ENCODE measurements at regions of chr9 and their contacts with region 1.

Region 1: DNA sequence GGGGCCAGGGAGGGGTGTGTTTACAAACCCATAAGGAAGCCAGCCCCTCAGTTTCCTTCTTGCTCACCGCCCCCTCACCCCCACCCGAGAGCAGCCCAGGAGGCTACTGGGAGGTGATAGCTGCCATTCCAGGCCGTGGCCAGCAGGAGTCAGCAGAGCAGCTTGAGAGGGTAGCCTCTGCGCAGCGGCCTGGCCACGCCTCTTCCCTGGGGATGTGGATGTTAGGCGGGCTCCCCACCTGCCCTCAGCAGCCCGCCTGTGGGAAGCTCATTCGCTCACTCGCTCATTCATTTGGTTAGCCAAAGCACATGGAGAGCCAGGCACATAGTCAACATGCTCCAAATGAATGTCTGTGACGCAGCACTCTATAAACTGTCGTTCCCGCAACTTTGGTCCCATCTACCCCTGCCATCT is 6.1 kb upstream of the DPM2 start:
- DNase-seq: peak; percentile 79 to 93
- H3K4me3 ChIP-seq: no peak overlapping the region
- H3K27ac ChIP-seq: no peak overlapping the region
- H3K4me1 ChIP-seq: peaks cover 0 to 16% (median 7%) of the 10 kb centered on the region in 4 experiments; a peak in 6 of 7 replicates
- H3K27me3 ChIP-seq: no peaks in the 10 kb centered on the region
- CTCF ChIP-seq: peak in 2 of 3 experiments; percentile 91 to 94; a peak in 3 of 4 replicates
- EP300 ChIP-seq: no peak
- POLR2A ChIP-seq: no peak
- RAD21 ChIP-seq: peak; percentile 85 to 88

Region 2: DNA sequence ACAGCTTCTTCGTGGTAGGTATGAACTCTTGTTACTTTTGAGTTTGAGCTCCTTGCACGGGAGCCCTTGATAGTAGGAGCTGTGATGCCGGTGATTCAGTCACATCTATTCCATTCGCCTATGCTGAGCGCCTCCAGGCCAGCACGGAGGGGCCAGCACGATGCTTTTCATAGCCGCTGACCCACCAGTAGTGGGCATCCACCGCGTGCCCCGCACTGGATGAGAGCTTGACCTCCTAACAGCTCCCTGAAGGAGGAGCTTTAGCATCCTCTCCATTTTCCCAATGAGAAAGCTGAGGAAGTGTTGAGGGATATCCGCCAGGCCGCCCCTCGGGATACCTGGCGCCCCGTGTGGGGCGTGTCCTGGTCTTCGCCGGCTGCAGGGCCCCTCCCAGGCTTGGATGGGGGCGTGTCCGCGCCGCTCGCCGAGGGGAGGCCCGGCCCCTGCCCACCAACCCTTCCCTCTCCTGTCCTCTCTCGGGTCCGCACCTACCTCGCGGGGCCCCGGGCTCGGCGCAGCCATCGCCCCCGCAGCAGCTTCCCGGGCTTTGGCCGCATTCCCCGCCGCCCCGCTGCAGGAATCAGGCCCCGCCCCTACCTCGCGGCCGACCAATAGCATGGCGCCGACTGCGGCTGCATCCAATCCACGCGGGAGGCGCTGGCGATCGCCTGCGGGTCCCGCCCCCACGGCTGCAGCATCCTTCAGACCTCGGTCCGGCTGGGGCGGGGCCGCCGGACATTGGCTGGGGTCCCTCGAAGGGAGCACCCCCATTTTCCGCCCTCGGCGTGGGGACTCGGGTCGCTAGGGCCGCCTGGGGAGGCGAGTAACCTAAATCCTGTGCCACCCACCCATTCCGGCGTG is 13.3 kb before region 1 on chr9 and contains the start of gene PIP5KL1:
- CTCF ChIA-PET with region 1: interaction called, 68 read pairs
- POLR2A ChIA-PET with region 1: interaction called, 6 read pairs
- DNase-seq: peak; percentile 67 to 97
- H3K4me3 ChIP-seq: peak within 1 kb of the TSS; percentile 26 to 62 (median 52)
- H3K27ac ChIP-seq: no peak within 1 kb of the TSS
- H3K4me1 ChIP-seq: peaks cover 13 to 24% (median 20%) of the 10 kb centered on the region in 4 experiments
- H3K27me3 ChIP-seq: peaks cover 0 to 18% (median 16%) of the 10 kb centered on the region in 4 experiments; a peak in 6 of 7 replicates
- CTCF ChIP-seq: peak in 1 of 3 experiments; percentile 5; a peak in 1 of 4 replicates
- EP300 ChIP-seq: 0 out of 3 replicates have a peak, but pooled peaks of 1 of the 2 experiments have one; percentile 9
- POLR2A ChIP-seq: peak in 1 of 2 experiments; percentile 39; a peak in 2 of 3 replicates
- RAD21 ChIP-seq: 0 out of 4 replicates have a peak, but pooled peaks of 1 of the 2 experiments have one; percentile 2
- total RNA-seq, gene PIP5KL1: 12.2 and 13.4 TPM in 2 replicates

Region 3: DNA sequence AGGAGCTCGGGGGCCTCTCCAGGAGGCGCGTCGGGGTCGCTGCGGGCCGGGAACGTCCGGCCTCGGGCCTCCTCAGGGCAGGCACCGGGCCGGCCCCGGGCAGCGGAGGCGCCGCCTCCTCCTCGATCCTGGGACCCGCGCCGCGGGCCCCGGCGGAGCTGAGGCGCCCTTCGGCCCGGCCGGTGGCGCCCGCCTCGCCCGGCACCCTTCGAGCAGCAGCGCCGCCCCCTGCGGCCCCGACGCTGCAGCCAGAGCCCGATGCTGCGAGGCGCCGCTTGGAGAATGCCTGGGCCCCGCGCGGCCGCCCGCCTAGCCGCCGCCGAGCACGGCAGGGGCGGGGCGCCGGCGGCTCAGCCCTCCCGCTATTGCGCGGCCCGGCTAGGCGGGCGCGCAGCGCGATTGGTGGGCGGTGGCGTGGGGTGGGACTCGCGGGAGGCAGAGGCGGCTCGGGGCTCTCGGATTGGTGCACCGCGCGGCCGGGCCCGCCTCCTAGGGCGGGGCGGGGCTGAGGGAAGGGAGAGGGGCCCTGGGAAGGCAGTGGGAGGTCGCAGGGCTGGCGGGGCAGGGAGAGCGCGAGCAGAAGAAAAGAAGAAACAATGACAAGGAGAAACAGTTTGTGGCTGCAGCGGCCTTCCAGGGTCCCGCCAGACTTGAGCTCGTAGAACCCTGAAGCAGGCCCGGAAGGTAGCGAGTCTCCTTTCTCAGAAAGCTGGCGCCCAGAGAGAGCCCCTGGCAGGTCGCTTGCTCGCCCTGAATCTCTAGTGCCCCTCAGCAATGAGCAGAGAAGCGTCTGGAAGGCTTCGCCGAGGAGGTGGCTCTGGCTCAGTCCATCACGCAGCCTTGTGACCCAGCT is 37.2 kb after region 1 on chr9 and contains the start of gene EEIG1:
- CTCF ChIA-PET with region 1: interaction called, 55 read pairs
- POLR2A ChIA-PET with region 1: interaction called, 5 read pairs
- DNase-seq: peak; percentile 80 to 97
- H3K4me3 ChIP-seq: peak within 1 kb of the TSS; percentile 88 to 99 (median 93)
- H3K27ac ChIP-seq: peak within 1 kb of the TSS; percentile 79
- H3K4me1 ChIP-seq: peaks cover 4 to 34% (median 24%) of the 10 kb centered on the region in 4 experiments
- H3K27me3 ChIP-seq: no peaks in the 10 kb centered on the region
- CTCF ChIP-seq: no peak; a peak in 1 of 4 replicates
- EP300 ChIP-seq: no peak
- POLR2A ChIP-seq: no peak; a peak in 2 of 3 replicates
- RAD21 ChIP-seq: no peak
- total RNA-seq, gene EEIG1: 50.8 and 51.3 TPM in 2 replicates

Region 4: DNA sequence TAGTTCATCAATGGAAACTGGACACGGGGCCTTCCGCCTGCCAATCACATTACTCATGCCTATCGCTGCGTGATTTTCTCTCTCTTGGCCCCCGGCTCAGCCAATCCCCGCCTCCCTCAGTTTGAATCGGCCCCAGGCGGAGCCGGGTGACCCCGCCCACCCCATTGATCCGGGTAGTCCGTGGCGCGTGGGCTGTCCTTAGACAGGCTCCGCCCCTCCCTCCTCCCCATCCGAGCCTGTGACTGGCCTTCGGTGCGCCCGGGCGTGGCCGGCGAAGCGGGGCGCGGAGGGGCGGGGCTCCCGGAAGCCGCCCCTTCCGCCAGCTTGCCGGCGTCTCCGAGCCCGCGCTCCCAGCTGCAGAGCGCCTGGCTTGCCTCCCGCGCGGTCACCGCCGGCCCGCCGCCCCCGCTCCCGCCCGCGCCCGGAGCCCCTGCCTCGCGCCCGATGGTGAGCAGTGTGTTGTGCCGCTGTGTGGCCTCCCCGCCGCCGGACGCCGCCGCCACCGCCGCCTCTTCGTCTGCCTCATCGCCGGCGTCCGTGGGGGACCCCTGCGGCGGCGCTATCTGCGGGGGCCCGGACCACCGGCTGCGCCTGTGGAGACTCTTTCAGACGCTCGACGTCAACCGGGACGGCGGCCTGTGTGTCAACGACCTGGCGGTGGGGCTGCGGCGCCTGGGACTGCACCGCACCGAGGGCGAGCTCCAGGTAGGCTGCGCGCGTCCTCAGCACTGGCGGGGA is 124.3 kb after region 1 on chr9 and contains the start of gene SLC25A25:
- CTCF ChIA-PET with region 1: interaction called, 27 read pairs
- POLR2A ChIA-PET with region 1: interaction called, 3 read pairs
- DNase-seq: peak; percentile 98 to 100
- H3K4me3 ChIP-seq: peak within 1 kb of the TSS; percentile 75 to 84 (median 82)
- H3K27ac ChIP-seq: peak within 1 kb of the TSS; percentile 92
- H3K4me1 ChIP-seq: peaks cover 10 to 16% (median 12%) of the 10 kb centered on the region in 4 experiments
- H3K27me3 ChIP-seq: no peaks in the 10 kb centered on the region; a peak in 1 of 7 replicates
- CTCF ChIP-seq: no peak
- EP300 ChIP-seq: no peak
- POLR2A ChIP-seq: no peak
- RAD21 ChIP-seq: no peak
- total RNA-seq, gene SLC25A25: 16.8 and 18.5 TPM in 2 replicates

Region 5: DNA sequence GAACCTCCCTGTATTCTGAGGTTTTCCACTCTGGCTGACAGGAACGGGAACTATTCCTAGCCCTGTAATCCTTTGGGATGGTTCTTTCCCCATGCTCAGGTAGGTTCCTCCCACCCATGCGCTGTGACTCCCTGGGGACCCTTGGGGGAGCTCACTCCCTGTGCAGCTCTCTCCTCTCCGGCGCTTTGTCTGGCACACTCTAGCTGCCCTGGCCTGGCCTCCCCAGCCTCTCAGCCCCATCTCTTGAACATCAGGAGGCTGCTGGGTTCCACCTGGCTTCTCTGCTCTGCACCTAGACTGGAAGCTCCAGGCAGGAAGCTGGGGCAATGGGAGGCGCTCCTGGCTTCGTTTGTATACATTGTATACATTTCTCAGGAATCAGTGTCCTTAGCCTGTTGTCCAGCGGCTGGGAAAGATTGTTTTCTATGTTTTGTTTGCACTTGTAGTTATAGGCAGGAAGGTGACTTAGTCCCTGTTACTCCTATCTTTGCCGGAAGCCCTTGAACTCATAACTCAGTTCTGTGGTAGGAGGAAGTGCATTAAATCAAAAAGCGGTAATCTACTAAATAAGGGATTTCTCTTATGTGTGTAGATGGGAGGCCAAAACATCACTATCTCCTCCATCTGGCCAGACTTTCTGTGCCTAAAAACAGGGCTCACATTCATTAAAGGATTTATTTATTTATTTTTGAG is 144.7 kb after region 1 on chr9:
- CTCF ChIA-PET with region 1: interaction called, 17 read pairs
- POLR2A ChIA-PET with region 1: no interaction called
- DNase-seq: no peak
- H3K4me3 ChIP-seq: no peak overlapping the region
- H3K27ac ChIP-seq: no peak overlapping the region
- H3K4me1 ChIP-seq: peaks cover 2 to 5% (median 2%) of the 10 kb centered on the region in 4 experiments; a peak in 4 of 7 replicates
- H3K27me3 ChIP-seq: no peaks in the 10 kb centered on the region
- CTCF ChIP-seq: no peak
- EP300 ChIP-seq: no peak
- POLR2A ChIP-seq: no peak
- RAD21 ChIP-seq: no peak

Region 6: GRCh38 chr9:128117613-128118471 is 174.1 kb after region 1 on chr9:
- CTCF ChIA-PET with region 1: interaction called, 21 read pairs
- POLR2A ChIA-PET with region 1: interaction called, 4 read pairs
- DNase-seq: peak; percentile 91 to 100
- H3K4me3 ChIP-seq: peak overlapping the region in 2 of 4 experiments; percentile 14 to 40; a peak in 5 of 8 replicates
- H3K27ac ChIP-seq: no peak overlapping the region
- H3K4me1 ChIP-seq: peaks cover 0 to 4% (median under 1%) of the 10 kb centered on the region in 4 experiments; a peak in 3 of 7 replicates
- H3K27me3 ChIP-seq: no peaks in the 10 kb centered on the region
- CTCF ChIP-seq: peak in 2 of 3 experiments; percentile 100; a peak in 3 of 4 replicates
- EP300 ChIP-seq: no peak
- POLR2A ChIP-seq: peak in 1 of 2 experiments; percentile 21; a peak in 1 of 3 replicates
- RAD21 ChIP-seq: peak; percentile 95